Posterior cingulate gyrus (tissue), 11 donors: ENCODE measurements at regions of chr2 and their contacts with region 1.

Region 1: GRCh38 chr2:127695491-127696472 is 5.5 kb upstream of the SFT2D3 start:
- DNase-seq: peak in 9 of 10 donors; percentile 44 to 95 (median 65)

Region 2: DNA sequence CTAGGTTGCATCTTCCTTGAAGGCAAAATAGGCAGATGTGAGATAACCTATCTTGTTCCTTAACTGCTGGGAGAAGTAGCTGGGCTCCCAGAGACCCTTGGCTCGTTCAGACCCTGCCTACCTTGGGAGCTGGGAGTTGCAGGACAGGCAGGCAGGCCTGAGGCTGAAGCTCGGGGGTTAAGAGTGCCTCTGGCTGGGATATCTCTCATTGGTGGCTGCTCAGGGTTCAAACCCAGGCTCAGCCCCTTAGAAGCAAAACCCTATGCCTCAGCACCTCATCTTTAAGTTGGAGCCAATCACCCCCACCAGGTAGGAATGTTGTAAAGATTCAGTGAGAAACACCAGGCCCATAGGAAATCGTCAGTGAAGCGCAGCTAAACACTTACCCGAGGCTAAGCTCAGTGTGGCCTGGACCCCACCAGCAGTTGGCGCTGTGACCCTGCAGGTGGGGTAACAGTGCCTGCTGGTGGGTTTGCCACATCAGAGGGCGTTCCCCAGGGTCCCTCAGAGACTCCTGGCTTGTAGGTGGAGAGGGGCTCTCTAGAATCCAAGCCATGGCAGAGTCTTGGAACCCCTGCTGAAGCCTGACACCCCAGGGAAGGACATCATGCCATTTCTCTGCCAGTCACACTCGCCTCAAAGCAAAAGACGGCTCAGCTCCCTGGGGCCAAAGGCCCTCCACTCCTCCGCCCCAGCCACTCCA is 104.4 kb before region 1 on chr2:
- intact Hi-C with region 1: loop called (anchors 5 kb)
- DNase-seq: peak in 7 of 10 donors; percentile 37 to 93 (median 64)

Region 3: DNA sequence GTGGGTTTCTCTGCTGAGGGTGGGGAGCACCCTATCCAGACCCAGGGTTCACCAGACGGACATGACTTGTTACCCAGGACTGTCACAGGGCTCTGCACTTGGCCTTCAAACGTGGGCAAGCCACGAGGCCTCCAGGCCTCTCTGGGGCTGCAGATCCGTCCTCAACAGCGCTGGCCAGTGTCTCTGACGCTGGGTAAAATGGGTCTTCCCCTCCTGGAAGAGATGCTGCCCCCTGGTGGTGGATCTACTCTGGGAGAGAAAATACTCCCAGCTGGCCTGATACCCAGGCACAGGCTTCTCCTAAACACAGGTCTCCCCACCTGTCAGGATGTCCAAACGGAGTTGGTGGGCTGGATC is 46.1 kb before region 1 on chr2:
- intact Hi-C with region 1: loop called (anchors 5 kb)
- DNase-seq: peak in 8 of 10 donors; percentile 70 to 95 (median 84)